ENCODE measurements at regions of chr11 and their contacts with region 1.

Region 1: GRCh38 chr11:62081378-62082291 is 42.2 kb upstream of the INCENP start:
- DNase-seq: peak; percentile 73
- H3K27ac ChIP-seq: 0 out of 2 replicates have a peak overlapping the region, but pooled peaks have one; percentile 10
- CTCF ChIP-seq: peak; percentile 88

Region 2: DNA sequence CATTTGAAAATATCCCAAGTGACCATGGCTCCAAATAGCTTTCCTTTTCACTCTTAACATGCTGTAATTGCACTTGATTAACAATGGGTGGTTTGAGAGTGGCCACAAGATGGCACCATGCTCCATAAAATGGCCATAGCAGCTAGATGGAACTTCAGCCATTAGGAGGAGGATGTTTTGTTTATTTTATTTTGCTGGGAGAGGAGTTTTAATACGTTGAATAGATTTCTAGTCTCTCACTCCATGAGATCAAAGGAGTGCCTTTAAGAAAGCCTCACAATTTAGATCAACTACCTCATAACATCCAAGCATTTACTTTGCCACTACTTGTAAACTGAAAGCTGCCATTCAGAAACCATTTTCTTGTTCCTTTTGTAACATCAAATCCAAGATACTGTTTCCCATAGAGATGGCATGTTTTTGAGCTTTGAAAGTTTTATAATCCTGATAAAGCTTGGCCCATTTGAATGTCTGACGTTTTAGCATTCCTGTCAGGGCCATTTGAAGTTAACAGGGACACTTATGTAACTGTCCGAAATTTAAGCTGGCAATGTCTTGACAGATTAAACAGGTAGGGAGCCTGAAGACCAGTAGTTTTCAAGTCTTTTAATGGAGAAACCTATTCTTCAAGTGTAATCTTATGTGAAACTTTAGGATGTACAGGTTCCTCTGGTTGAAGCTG is 284.2 kb before region 1 on chr11:
- CTCF ChIA-PET with region 1: interaction called, 16 read pairs
- POLR2A ChIA-PET with region 1: no interaction called
- DNase-seq: peak; percentile 62
- H3K27ac ChIP-seq: no peak overlapping the region
- CTCF ChIP-seq: peak; percentile 81

Region 3: DNA sequence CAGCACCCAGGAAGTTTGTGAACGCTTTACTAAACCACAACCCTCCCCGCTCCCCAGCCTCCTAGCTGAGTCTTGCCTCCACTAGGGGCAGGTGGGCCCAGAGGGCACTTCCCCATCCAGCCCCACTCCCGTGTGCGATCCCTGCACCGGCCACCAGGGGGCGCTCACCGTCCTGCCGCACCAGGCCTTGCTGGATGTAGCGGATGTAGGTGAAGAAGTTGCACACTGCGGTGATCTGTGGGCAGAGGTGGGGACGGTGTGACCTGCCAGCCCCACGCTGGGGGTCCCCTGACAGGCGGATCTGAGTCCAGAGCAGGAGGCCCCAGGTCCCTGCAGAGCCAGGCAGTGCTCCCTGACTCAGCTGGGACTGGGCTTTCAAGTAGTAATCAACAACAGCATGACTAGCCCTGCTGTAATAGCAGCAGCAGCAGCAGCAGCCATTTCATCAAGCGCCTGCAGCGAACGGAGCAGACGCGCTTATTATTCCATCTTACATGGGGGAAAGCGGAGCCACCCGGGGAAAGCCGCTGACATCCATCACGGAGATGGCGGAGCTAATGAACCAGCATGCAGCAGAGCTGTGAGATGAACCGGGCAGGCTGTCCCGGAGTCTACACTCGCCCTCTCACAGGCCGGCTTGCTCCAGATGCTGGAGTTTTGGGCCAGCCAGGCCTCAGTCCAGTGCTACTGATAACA is 182.3 kb before region 1 on chr11:
- CTCF ChIA-PET with region 1: interaction called, 62 read pairs
- POLR2A ChIA-PET with region 1: no interaction called
- DNase-seq: peak; percentile 86
- H3K27ac ChIP-seq: peak overlapping the region; percentile 90; the same call in 1 of the 2 replicates
- CTCF ChIP-seq: peak; percentile 98

Region 4: GRCh38 chr11:61927501-61927900 is 154.1 kb before region 1 on chr11:
- CTCF ChIA-PET with region 1: no interaction called
- POLR2A ChIA-PET with region 1: no interaction called
- DNase-seq: no peak
- H3K27ac ChIP-seq: no peak overlapping the region
- CTCF ChIP-seq: no peak

Region 5: DNA sequence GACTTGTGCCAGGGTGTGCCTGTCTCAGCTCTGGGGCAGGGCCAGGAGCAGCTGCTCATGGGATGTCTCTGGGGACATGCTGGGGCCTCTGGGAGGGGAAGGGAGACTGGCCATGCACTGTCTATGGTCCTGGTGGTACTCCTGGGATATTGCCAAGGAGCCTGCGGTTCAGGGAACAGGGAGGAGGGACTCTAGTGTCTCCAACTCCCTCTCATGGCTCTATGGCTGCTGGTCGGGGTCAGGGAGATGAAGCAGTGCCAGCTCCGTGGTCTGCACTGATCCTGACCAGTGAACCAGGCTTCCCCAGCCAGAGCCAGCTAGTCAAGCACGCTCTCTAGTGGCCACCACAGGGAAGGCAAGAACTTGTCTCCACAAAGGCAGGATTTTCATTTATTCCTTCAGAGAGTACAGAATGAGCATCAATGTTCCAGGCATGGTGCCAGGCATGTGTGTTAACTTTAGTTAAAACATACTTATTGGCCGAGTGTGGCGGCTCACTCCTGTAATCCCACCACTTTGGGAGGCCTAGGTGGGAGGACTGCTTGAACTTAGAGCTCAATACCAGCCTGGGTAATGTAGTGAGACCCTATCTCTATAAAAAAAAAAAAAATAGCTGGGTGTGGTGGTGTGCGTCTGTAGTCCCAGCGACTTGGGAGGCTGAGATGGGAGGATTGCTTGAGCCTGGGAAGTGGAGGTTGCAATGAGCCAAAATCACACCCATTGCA is 134.0 kb before region 1 on chr11:
- CTCF ChIA-PET with region 1: interaction called, 26 read pairs
- POLR2A ChIA-PET with region 1: no interaction called
- DNase-seq: peak; percentile 81
- H3K27ac ChIP-seq: no peak overlapping the region
- CTCF ChIP-seq: peak; percentile 92

Region 6: GRCh38 chr11:62108017-62108750 is 26.5 kb after region 1 on chr11:
- CTCF ChIA-PET with region 1: interaction called, 27 read pairs
- POLR2A ChIA-PET with region 1: no interaction called
- DNase-seq: peak; percentile 59
- H3K27ac ChIP-seq: no peak overlapping the region
- CTCF ChIP-seq: peak; percentile 81

Region 7: DNA sequence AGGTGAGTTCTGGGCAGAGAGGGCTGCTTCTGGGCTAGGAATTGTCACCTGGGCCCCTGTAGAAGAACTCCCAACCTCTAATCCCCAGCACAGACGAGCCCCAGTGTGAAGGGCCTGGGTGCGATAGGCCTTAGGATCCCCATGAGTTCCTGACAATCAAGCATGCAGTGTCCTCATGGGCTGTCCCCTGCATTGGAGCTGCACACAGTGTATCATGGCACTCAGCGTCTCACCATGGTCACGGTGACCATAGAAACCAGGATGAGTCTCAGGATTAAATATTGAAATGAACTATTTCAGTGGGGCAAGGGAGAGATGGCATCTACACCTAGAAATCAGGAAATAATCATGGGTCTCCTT is 127.1 kb after region 1 on chr11:
- CTCF ChIA-PET with region 1: no interaction called
- POLR2A ChIA-PET with region 1: no interaction called
- DNase-seq: no peak
- H3K27ac ChIP-seq: no peak overlapping the region
- CTCF ChIP-seq: no peak

Measured in RWPE1 (cell line).